Activated T-helper 2 cell treated with anti-CD3 and anti-CD28 coated beads, Interferon-gamma antibody, Interleukin-2, Interleukin-4, amounts not matched to agents 10 μg/mL and 5 μg/mL and 100 μg/mL, durations not matched to agents 14 hours and 24 hours and 36 hours (primary cell): ENCODE measurements at regions of chr15 and their contacts with region 1.

Region 1: DNA sequence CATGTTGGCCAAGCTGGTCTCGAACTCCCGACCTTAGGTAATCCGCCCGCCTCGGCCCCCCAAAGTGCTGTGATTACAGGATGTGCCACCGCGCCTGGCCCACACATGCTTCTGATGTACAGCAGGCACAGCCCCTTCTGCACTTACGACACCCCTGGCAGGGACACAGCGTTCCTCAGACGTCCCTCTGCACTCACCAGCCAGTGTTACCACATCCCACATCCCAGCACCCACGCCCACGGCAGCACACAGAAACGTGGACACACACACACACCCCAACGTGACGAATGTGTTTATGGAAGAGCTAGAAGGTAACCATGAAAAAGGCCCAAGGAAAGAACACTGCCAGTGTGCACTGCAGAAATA is 576 bp upstream of the RPAP1 start:
- DNase-seq: no peak
- H3K4me3 Mint-ChIP-seq: peak overlapping the region; percentile 97
- H3K27ac Mint-ChIP-seq: peak overlapping the region; percentile 42
- H3K4me1 Mint-ChIP-seq: peaks cover 13% of the 10 kb centered on the region
- H3K27me3 Mint-ChIP-seq: no peaks in the 10 kb centered on the region

Region 2: GRCh38 chr15:41512940-41513510 is 31.6 kb before region 1 on chr15:
- intact Hi-C with region 1: loop called (anchors 2 kb)
- DNase-seq: no peak
- H3K4me3 Mint-ChIP-seq: peak overlapping the region; percentile 62
- H3K27ac Mint-ChIP-seq: no peak overlapping the region
- H3K4me1 Mint-ChIP-seq: peaks cover 24% of the 10 kb centered on the region
- H3K27me3 Mint-ChIP-seq: peaks cover 35% of the 10 kb centered on the region

Region 3: GRCh38 chr15:41557673-41558399 is 13.2 kb after region 1 on chr15:
- intact Hi-C with region 1: loop called (anchors 1 kb)
- DNase-seq: peak; percentile 62
- H3K4me3 Mint-ChIP-seq: peak overlapping the region; percentile 83
- H3K27ac Mint-ChIP-seq: peak overlapping the region; percentile 71
- H3K4me1 Mint-ChIP-seq: peaks cover 20% of the 10 kb centered on the region
- H3K27me3 Mint-ChIP-seq: peaks cover 42% of the 10 kb centered on the region